G401 (cell line): ENCODE measurements at regions of chr21 and their contacts with region 1.

Region 1: DNA sequence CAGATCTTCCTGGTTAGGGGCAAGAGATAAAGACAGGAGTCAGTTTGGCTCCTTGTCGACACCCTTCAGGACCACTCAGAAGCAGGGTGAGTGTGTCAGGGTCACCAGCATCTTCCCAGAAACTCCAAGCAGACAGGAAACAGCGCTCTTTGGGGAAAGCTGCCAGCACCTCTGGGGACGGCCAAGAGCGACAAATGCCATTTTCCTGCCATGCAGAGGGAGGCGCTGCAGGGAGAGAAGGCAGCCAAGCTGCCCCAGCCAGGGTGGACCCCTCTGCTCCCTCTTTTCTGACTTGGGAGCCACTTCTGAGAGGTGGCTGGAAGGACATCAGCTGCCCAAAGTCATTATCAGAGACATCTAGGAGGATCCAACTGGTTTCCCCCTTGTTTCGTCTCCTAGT is 29.0 kb downstream of the SIM2 start:
- DNase-seq: no peak

Region 2: DNA sequence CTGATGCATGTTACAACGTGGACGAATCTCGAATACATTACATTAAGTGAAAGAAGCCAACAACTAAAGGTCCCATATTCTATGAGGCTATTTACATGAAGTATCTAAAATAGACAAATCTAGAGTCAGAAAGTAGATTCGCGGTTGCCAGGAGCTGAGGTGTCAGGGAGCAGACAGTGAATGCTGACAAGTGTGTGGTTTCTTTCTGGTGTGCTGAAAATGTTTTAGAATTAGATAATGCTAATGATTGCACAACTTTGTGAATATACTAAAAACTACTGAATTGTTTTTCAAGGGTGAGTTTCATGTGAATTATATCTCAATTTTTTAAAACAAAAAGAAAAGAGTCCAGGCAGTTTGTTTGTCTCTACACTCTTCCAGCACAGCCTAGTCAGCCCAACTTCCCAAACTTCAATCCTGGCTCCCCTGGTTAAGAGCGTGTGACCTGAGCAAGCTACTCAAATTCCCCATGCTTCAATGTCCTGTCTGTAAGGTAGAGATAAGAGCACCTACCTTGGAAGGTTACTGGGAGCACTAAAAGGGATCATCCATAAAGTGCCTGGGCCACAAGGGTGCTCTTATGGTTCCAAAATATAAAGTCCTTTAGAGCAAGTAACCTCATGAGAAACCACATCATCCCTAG is 217.8 kb after region 1 on chr21:
- in situ Hi-C with region 1: loop called (anchors 10 kb)
- DNase-seq: no peak

Region 3: DNA sequence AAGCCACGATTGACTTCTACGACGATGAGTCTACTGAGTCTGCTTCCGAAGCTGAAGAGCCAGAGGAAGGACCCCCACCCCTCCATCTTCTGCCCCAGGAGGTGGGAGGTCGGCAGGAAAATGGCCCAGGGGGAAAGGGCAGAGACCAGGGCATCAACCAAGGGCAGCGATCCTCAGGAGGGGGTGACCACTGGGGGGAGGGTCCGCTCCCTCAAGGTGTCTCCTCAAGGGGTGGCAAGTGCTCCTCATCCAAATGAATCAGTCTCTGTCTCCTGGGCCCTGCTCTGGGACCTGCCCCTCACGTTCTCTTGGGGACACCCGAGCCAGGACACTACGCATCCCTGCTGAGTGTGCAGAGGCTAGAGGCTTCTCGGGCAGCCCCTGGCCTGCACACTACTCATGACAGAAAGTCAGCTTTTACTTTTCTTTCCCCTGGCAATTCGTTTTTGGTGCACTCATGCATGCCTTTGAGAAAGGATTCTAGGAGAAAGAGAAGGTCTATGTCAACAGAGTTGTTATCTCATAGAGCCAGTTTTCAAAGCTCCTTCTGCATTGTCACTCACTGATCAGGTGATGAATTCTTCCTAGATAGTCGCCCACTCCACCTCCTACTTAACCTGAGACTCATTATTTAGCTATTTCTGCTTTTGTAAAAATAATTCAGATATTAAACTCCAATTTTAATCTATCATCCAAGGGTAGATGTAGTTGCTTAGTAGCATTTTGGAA is 290.2 kb after region 1 on chr21:
- in situ Hi-C with region 1: no loop called
- DNase-seq: no peak